Transverse colon (tissue), 4 donors: ENCODE measurements at regions of chr1 and their contacts with region 1.

Region 1: DNA sequence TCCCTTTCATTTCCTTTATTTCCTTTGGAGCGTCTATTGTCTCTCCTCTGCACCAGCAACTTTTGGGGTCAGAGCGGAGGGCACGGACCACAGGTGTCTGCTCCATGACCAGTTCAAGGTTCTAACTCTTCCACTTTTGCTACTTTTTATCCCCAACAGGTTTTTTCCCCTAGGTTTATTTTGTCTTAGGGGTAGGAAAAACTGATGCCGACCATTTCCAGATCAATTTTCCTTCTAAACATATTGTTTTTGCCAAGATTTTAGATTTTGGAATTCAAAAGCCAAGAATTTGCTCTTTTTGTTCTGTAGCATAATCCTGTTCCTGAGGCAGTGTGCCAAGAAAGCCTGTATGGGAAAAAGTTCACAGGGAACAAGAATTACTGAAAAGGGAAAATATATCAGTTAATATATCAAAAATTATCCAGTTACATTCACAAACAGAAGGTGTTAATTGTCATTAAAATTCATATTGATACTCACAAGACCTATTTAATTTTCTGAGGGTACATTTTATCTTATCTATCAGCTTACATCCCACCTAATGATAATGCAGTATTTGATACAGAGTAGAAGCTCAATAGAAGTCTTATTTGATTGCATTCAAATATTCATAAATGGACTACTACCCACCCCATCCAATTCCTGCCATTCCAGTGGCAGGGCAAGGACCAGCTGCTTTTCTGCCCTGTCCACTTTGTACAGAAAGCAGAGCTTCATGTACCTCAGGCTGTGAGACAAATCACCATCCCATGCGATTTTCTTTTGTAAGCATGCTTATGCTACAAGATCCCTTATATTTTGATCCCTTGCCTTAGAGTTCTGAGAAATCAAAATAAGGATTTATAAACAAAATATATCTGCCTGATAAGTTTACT is 31.2 kb downstream of the TSEN15 start:
- DNase-seq: no peak
- H3K4me3 ChIP-seq: no peak overlapping the region
- H3K27ac ChIP-seq: no peak overlapping the region
- H3K4me1 ChIP-seq: no peaks in the 10 kb centered on the region
- H3K27me3 ChIP-seq: no peaks in the 10 kb centered on the region
- CTCF ChIP-seq: no peak
- EP300 ChIP-seq: no peak
- POLR2A ChIP-seq: no peak

Region 2: GRCh38 chr1:183850852-183851251 is 231.9 kb before region 1 on chr1:
- in situ Hi-C with region 1: no loop called
- intact Hi-C with region 1: no loop called
- DNase-seq: no peak
- H3K4me3 ChIP-seq: no peak overlapping the region
- H3K27ac ChIP-seq: no peak overlapping the region
- H3K4me1 ChIP-seq: no peaks in the 10 kb centered on the region
- H3K27me3 ChIP-seq: no peaks in the 10 kb centered on the region
- CTCF ChIP-seq: no peak
- EP300 ChIP-seq: no peak
- POLR2A ChIP-seq: no peak

Region 3: DNA sequence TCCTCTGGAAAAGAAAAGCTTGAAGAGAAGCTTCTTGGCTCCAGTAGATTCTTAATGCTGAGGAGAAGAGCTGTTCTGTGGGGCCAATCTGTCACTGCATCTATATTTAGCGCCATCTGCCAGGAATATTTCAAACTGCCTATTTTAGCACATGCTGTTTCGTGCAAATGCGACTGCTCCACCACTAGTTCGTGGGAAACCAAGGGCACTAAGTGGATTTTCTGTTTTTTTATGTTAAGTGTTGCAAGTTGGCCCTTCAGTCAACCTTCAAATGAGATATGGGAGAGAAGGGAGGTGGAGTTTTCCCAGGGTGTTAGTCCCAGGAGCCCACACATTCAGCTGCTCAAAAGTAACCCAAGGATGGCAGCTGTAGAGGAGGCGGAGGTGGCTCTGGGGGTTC is 60.7 kb after region 1 on chr1:
- in situ Hi-C with region 1: no loop called
- intact Hi-C with region 1: no loop called
- DNase-seq: no peak
- H3K4me3 ChIP-seq: no peak overlapping the region
- H3K27ac ChIP-seq: no peak overlapping the region
- H3K4me1 ChIP-seq: no peaks in the 10 kb centered on the region
- H3K27me3 ChIP-seq: no peaks in the 10 kb centered on the region
- CTCF ChIP-seq: no peak
- EP300 ChIP-seq: no peak
- POLR2A ChIP-seq: no peak

Region 4: GRCh38 chr1:184684285-184685074 is 601.7 kb after region 1 on chr1:
- in situ Hi-C with region 1: loop called in 1 of 4 experiments (anchors 10 kb)
- intact Hi-C with region 1: no loop called
- DNase-seq: peak; percentile 14
- H3K4me3 ChIP-seq: no peak overlapping the region
- H3K27ac ChIP-seq: no peak overlapping the region
- H3K4me1 ChIP-seq: no peaks in the 10 kb centered on the region
- H3K27me3 ChIP-seq: no peaks in the 10 kb centered on the region
- CTCF ChIP-seq: no peak
- EP300 ChIP-seq: no peak
- POLR2A ChIP-seq: no peak